Left cardiac atrium (tissue), 4 donors: ENCODE measurements at regions of chr21 and their contacts with region 1.

Region 1: DNA sequence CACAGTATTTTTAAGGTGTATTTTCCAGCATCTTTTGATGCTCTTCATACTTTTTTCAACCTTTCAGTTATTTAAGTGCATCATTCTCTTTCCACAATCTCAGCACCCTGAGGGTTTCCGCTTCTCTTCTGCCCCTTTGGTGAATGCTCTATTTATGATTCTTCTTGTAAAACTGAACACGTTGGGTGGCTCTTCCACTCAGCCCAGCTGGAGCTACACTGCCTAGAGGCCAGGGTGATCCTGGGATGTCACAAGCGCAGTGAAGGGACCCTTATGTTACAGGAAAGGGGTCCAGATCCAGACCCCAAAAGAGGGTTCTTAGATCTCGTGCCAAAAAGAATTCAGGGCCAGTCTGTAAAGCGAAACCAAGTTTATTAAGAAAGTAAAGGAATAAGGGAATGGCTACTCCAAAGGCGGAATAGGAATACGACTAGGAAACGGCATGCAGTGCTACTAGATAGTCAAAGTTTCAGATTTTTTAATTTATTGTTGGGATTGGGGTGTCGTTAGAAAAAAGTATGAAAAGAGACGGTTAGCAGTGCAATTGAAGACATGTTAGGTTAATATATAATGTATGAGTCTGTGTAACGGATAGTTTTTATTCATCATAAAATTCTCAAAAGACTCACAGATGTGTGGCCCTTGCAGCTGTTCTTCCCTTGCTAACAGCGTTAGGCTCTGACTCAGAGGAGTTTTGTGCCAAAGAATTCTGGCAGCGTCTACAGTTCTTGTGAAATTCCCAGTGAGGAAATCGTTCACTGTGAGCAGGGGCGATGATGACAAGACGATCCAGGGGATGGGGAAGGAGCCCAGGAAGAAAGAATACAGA is 14.4 kb upstream of the ERVH48-1 start:
- DNase-seq: peak; percentile 75
- ATAC-seq: peak; percentile 97 to 98

Region 2: DNA sequence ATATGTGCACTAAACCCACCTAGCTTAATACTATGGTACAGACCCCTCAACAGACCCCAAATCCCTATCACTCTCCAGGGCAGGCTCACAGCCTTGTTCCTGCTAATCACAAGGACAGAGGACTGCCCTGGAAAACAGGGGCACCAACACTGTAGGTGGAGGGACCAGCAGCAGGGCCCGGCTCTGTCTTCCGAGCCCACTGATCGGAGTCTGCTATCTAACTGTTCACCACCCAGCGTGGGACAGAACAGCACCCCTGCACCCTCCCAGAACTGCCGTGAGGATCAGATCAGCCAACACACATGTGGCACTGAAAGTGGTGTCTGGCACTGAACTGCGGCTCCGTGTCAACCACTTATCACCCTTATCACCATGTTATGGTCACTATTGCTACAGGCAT is 66.7 kb before region 1 on chr21:
- intact Hi-C with region 1: no loop called
- DNase-seq: no peak
- ATAC-seq: no peak

Region 3: GRCh38 chr21:42892931-42893755 is 46.7 kb before region 1 on chr21 and contains the start of gene NDUFV3:
- intact Hi-C with region 1: no loop called
- DNase-seq: peak; percentile 100
- ATAC-seq: peak; percentile 97 to 99
- total RNA-seq, gene NDUFV3: 46.4 to 49.7 TPM

Region 4: DNA sequence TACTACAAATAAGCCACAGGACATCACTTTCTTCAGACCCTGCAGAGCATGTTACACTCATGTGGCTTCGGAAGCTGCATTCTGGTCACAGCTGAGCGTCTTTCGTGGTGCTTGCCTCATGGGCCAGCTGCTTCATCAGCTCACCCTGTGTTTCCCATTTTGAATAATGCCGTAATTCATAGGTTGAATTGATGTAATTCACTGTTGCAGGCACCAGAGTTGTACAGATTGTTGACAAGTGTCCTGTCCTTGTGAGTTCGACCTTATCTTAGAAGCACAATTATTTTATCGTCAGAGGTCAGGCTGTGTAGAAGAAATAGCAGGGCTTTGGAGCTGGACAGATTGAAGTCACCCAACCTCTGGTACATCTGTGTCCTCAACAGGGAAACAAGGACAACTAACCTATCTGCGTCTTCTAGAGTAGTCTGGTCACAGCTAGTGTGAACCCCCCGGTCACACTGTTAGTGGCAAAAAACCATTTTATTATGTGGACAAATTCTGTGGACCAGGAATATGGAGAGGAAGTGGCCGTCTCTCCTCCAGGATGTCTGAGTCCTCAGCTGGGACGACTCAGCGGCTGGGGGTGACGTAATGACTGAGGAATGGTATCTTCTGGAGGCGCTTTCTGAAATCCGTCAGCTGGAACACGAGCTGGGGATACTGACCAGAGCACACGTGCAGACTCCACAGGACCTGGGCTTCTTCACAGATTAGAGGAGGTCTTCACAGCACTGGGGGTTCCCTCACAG is 52.4 kb after region 1 on chr21:
- intact Hi-C with region 1: loop called in 1 of 2 experiments (anchors 5 kb)
- DNase-seq: peak; percentile 82
- ATAC-seq: peak; percentile 90 to 95

Region 5: GRCh38 chr21:43854773-43855633 is 915.2 kb after region 1 on chr21:
- intact Hi-C with region 1: no loop called
- DNase-seq: no peak
- ATAC-seq: peak in 1 of 2 donors; percentile 59